Tibial artery (tissue), 4 donors: ENCODE measurements at regions of chr19 and their contacts with region 1.

Region 1: GRCh38 chr19:6110360-6110977 is at the start of gene RFX2:
- DNase-seq: peak; percentile 98 to 100
- H3K4me3 ChIP-seq: peak within 1 kb of the TSS; percentile 61 to 92
- H3K27ac ChIP-seq: peak within 1 kb of the TSS; percentile 85 to 98
- H3K4me1 ChIP-seq: peaks cover 3 to 18% (median 14%) of the 10 kb centered on the region in 4 donors
- H3K27me3 ChIP-seq: no peaks in the 10 kb centered on the region
- CTCF ChIP-seq: no peak

Region 2: DNA sequence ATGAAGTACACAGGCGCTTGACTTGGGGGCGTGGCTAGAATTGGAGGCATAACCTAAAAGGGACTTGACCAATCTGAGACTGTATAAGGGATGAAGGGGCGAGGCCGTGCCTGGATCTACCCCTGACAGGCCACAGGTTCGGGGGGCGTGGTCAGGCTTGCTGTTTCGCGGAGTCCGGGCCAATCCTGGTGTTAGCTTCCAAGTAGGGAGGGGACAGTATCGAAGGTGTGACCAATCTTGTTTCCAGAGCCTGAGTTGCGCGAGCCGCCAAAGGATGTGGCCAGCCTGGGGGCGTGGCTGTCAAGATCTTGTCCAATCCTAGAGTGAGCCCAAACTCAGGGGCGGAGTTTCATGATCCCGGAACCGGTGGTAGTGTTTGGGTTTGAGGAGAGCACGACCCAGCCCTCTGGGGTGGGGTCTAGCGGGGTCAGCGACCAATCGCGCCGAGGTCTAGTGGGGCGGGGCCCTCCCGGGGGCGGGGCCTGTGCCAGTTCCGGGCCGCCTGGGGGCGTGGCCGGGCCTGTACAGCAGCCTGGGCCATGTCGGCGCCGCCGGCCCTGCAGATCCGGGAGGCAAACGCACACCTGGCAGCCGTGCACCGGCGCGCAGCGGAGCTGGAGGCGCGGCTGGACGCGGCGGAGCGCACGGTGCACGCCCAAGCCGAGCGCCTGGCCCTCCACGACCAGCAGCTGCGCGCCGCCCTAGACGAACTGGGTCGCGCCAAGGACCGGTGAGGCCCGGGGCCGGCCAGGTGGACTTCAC is 205.9 kb before region 1 on chr19 and contains the start of gene VMAC:
- intact Hi-C with region 1: no loop called
- DNase-seq: peak; percentile 100
- H3K4me3 ChIP-seq: peak within 1 kb of the TSS; percentile 72 to 90
- H3K27ac ChIP-seq: peak within 1 kb of the TSS; percentile 86 to 88
- H3K4me1 ChIP-seq: peaks cover 0 to 35% (median 24%) of the 10 kb centered on the region in 4 donors
- H3K27me3 ChIP-seq: no peaks in the 10 kb centered on the region
- CTCF ChIP-seq: no peak

Region 3: GRCh38 chr19:5987077-5987818 is 123.2 kb before region 1 on chr19:
- intact Hi-C with region 1: loop called (anchors 10 kb)
- DNase-seq: peak; percentile 82 to 83
- H3K4me3 ChIP-seq: peak overlapping the region; percentile 42 to 48
- H3K27ac ChIP-seq: peak overlapping the region in 1 of 2 donors; percentile 38
- H3K4me1 ChIP-seq: peaks cover 0 to 28% (median 10%) of the 10 kb centered on the region in 4 donors
- H3K27me3 ChIP-seq: no peaks in the 10 kb centered on the region
- CTCF ChIP-seq: peak; percentile 83 to 95

Region 4: DNA sequence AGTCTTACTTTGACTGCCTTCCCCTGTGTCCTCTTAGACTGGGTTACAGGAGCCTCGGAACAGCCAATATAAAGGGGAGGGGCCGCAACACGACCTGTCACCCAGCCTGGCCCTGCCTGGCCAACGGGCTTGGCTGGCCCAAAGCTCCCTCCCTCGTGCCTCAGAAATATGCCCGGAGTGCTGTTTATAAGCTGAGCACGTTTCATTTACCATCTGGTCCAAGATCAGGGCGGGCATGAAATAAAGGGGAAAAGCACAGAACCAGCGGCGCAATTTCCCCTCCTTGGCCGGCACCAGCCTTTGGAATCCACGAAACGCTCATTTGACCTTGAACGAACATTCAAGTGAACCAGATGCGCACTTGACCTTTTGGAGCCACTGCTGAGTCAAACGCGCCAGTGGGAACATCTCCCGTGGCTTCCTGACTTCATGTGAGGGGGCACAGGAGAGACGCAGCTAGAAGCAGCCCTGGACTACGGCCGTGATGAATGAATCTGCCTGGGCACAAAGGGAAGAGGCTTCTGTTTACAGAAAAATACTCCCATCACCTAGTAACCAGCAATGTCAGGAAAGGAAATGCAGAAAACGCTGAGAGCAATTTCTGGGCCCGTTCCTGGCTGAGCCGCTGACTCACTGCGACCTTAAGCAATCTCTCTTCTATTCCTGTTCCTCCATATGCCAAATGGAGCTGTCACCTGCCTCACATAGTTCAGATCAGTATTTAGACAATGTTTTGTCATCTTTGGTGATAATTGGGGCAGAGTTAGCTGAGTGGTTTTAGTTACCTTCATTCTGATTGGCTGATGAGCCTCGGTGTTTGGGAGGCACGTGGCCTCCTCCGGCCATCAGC is 53.4 kb before region 1 on chr19:
- intact Hi-C with region 1: loop called (anchors 5 kb)
- DNase-seq: peak; percentile 91 to 92
- H3K4me3 ChIP-seq: peak overlapping the region; percentile 24 to 45
- H3K27ac ChIP-seq: peak overlapping the region; percentile 83 to 96
- H3K4me1 ChIP-seq: peaks cover 6 to 63% (median 48%) of the 10 kb centered on the region in 4 donors
- H3K27me3 ChIP-seq: no peaks in the 10 kb centered on the region
- CTCF ChIP-seq: peak in 1 of 2 experiments; percentile 4